ENCODE measurements at regions of chr2 and their contacts with region 1.

Region 1: GRCh38 chr2:122273785-122274419 is 518.5 kb downstream of the TSN start:
- DNase-seq: no peak
- H3K4me3 ChIP-seq: no peak overlapping the region
- H3K27ac ChIP-seq: no peak overlapping the region
- H3K4me1 ChIP-seq: no peaks in the 10 kb centered on the region
- H3K27me3 ChIP-seq: no peaks in the 10 kb centered on the region
- CTCF ChIP-seq: no peak
- EP300 ChIP-seq: no peak
- POLR2A ChIP-seq: no peak

Region 2: DNA sequence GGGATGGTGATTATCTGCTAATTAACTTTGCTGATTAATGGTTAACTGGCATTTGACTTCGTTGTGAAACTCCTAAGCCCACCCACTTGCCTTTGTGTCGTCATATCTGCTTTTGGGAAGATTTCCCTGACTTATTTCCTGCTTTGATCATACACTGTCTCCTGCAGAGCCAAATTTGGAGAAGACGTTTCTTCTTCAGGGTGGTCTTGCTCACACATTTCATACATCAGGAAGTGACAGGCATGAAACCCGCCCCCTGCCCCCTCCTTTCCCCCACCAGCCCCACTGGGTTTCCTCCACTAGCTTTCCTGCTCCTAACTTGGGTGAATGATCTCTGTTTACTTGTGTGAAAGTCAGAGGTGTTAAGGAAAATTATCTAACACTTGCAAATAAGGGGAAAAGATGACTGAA is 218.4 kb before region 1 on chr2:
- intact Hi-C with region 1: no loop called
- DNase-seq: no peak
- H3K4me3 ChIP-seq: no peak overlapping the region
- H3K27ac ChIP-seq: no peak overlapping the region
- H3K4me1 ChIP-seq: no peaks in the 10 kb centered on the region
- H3K27me3 ChIP-seq: no peaks in the 10 kb centered on the region
- CTCF ChIP-seq: no peak
- EP300 ChIP-seq: no peak
- POLR2A ChIP-seq: no peak

Region 3: GRCh38 chr2:122244595-122245229 is 29.2 kb before region 1 on chr2:
- intact Hi-C with region 1: loop called in 1 of 4 experiments (anchors 1 kb)
- DNase-seq: no peak
- H3K4me3 ChIP-seq: no peak overlapping the region
- H3K27ac ChIP-seq: no peak overlapping the region
- H3K4me1 ChIP-seq: no peaks in the 10 kb centered on the region
- H3K27me3 ChIP-seq: no peaks in the 10 kb centered on the region
- CTCF ChIP-seq: no peak
- EP300 ChIP-seq: no peak
- POLR2A ChIP-seq: no peak

Region 4: GRCh38 chr2:123157016-123157415 is 883.1 kb after region 1 on chr2:
- intact Hi-C with region 1: no loop called
- DNase-seq: no peak
- H3K4me3 ChIP-seq: no peak overlapping the region
- H3K27ac ChIP-seq: no peak overlapping the region
- H3K4me1 ChIP-seq: no peaks in the 10 kb centered on the region
- H3K27me3 ChIP-seq: no peaks in the 10 kb centered on the region
- CTCF ChIP-seq: no peak
- EP300 ChIP-seq: no peak
- POLR2A ChIP-seq: no peak

Measured in ovary (tissue), 10 donors.